CD8-positive, alpha-beta memory T cell (primary cell): ENCODE measurements at regions of chr10 and their contacts with region 1.

Region 1: GRCh38 chr10:110547139-110547761 is 20.2 kb upstream of the SMC3 start:
- DNase-seq: peak in 2 of 5 donors; percentile 61 to 63
- H3K4me3 ChIP-seq: no peak overlapping the region
- H3K4me3 Mint-ChIP-seq: no peak overlapping the region
- H3K27ac ChIP-seq: no peak overlapping the region
- H3K27ac Mint-ChIP-seq: no peak overlapping the region
- H3K4me1 ChIP-seq: no peaks in the 10 kb centered on the region
- H3K4me1 Mint-ChIP-seq: peaks cover 3 to 8% (median 4%) of the 10 kb centered on the region in 3 donors
- H3K27me3 ChIP-seq: no peaks in the 10 kb centered on the region
- H3K27me3 Mint-ChIP-seq: peaks cover 3 to 31% of the 10 kb centered on the region in 2 donors

Region 2: GRCh38 chr10:110304780-110305421 is 242.3 kb before region 1 on chr10 and contains the start of gene SMNDC1:
- CTCF ChIA-PET with region 1: interaction called, 28 read pairs
- POLR2A ChIA-PET with region 1: interaction called, 4 read pairs
- DNase-seq: peak; percentile 95 to 98 (median 96)
- H3K4me3 ChIP-seq: peak within 1 kb of the TSS; percentile 70
- H3K4me3 Mint-ChIP-seq: peak within 1 kb of the TSS; percentile 93 to 99 (median 98)
- H3K27ac ChIP-seq: peak within 1 kb of the TSS; percentile 80
- H3K27ac Mint-ChIP-seq: peak within 1 kb of the TSS; percentile 92 to 99 (median 99)
- H3K4me1 ChIP-seq: peaks cover 50% of the 10 kb centered on the region
- H3K4me1 Mint-ChIP-seq: peaks cover 49 to 59% (median 55%) of the 10 kb centered on the region in 3 donors
- H3K27me3 ChIP-seq: no peaks in the 10 kb centered on the region
- H3K27me3 Mint-ChIP-seq: peaks cover 0 to 4% of the 10 kb centered on the region in 2 donors
- total RNA-seq, gene SMNDC1: 54.9 to 60.1 TPM

Region 3: DNA sequence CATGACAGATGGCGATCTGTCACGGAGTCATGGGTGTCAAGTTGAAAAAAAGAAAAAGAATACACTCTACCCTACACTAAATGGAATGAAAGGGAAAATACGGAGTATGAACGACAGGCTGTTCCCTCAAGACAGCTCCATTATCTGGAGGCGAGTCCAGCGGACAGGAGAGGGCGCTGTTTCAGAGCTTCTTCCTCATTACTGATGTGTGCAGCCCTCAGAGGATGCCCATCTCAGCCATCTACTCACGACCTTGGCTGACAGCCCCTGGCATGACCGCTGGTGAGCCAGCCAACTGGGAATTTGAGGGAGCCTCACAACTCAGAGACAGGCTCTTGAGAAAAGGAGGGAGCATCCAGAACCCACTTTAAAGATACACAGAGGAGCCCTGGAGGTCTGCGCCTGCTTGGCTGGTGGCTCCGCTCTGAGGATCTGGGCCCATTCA is 192.9 kb before region 1 on chr10:
- CTCF ChIA-PET with region 1: interaction called, 40 read pairs
- POLR2A ChIA-PET with region 1: no interaction called
- DNase-seq: peak; percentile 43 to 84 (median 64)
- H3K4me3 ChIP-seq: no peak overlapping the region
- H3K4me3 Mint-ChIP-seq: peak overlapping the region in 6 of 7 donors; percentile 17 to 76 (median 45)
- H3K27ac ChIP-seq: no peak overlapping the region
- H3K27ac Mint-ChIP-seq: peak overlapping the region in 7 of 8 donors; percentile 35 to 99 (median 85)
- H3K4me1 ChIP-seq: peaks cover 48% of the 10 kb centered on the region
- H3K4me1 Mint-ChIP-seq: peaks cover 54 to 55% (median 54%) of the 10 kb centered on the region in 3 donors
- H3K27me3 ChIP-seq: no peaks in the 10 kb centered on the region
- H3K27me3 Mint-ChIP-seq: no peaks in the 10 kb centered on the region

Region 4: GRCh38 chr10:110368002-110368401 is 179.2 kb before region 1 on chr10:
- CTCF ChIA-PET with region 1: no interaction called
- POLR2A ChIA-PET with region 1: no interaction called
- DNase-seq: no peak
- H3K4me3 ChIP-seq: no peak overlapping the region
- H3K4me3 Mint-ChIP-seq: peak overlapping the region in 1 of 7 donors; percentile 37
- H3K27ac ChIP-seq: no peak overlapping the region
- H3K27ac Mint-ChIP-seq: peak overlapping the region in 1 of 8 donors; percentile 83
- H3K4me1 ChIP-seq: no peaks in the 10 kb centered on the region
- H3K4me1 Mint-ChIP-seq: peaks cover 0 to 8% (median 7%) of the 10 kb centered on the region in 3 donors
- H3K27me3 ChIP-seq: no peaks in the 10 kb centered on the region
- H3K27me3 Mint-ChIP-seq: peaks cover 0 to 6% of the 10 kb centered on the region in 2 donors